Head of caudate nucleus (tissue), 42 donors: ENCODE measurements at regions of chr1 and their contacts with region 1.

Region 1: GRCh38 chr1:211133836-211134669 is at the start of gene KCNH1:
- DNase-seq: peak; percentile 88 to 98 (median 94)

Region 2: GRCh38 chr1:210400043-210400840 is 733.8 kb before region 1 on chr1:
- intact Hi-C with region 1: loop called (anchors 10 kb)
- DNase-seq: peak; percentile 39 to 88 (median 76)

Region 3: GRCh38 chr1:210448297-210448892 is 685.7 kb before region 1 on chr1:
- intact Hi-C with region 1: loop called (anchors 2 kb)
- DNase-seq: peak in 26 of 42 donors; percentile 11 to 85 (median 56)

Region 4: GRCh38 chr1:210584439-210585113 is 549.5 kb before region 1 on chr1:
- intact Hi-C with region 1: loop called (anchors 2 kb)
- DNase-seq: peak; percentile 84 to 99 (median 95)